HepG2 (cell line): ENCODE measurements at regions of chr5 and their contacts with region 1.

Region 1: DNA sequence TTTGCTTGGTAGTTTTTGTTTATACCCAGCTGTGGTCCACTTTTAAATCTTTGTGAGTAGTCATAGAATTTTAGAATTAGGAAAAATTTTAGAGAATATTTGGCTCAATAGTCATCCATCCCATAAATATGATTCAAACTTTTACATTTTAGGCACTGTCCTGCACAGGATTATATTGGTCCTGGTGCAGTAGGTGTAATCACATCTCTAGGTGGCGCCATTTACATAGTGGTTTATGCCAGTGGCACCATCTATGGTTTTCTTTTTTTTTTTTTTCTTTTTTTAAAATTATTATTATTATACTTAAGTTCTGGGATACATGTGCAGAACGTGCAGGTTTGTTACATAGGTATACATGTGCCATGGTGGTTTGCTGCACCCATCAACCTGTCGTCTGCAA is 260.7 kb upstream of the KCNN2 start:
- DNase-seq: peak; percentile 15
- ATAC-seq: peak; percentile 55; the same call in 2 of the 3 replicates
- H3K4me3 ChIP-seq: no peak overlapping the region
- H3K27ac ChIP-seq: no peak overlapping the region
- H3K4me1 ChIP-seq: no peaks in the 10 kb centered on the region
- H3K27me3 ChIP-seq: no peaks in the 10 kb centered on the region
- CTCF ChIP-seq: peak; percentile 45
- EP300 ChIP-seq: no peak
- POLR2A ChIP-seq: no peak
- RAD21 ChIP-seq: no peak

Region 2: DNA sequence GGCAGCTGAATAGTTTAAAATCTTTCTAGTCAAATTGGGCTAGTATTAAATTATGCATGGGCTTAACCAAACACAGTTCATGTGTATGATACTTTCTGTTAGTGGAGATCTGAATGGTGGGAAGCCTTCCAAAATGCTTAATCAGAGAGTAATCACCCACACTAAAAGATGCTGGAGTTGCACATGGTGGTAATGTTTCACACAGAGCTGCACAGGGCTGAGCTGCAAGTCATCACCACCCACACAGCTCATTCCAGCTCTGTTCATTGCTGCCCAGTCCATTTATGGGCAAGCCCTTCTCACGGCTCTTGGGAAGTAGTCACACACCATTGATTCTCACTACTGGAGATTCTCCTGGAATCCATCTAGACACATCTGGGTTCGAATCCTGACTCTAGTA is 90.8 kb before region 1 on chr5:
- CTCF ChIA-PET with region 1: no interaction called
- POLR2A ChIA-PET with region 1: no interaction called
- in situ Hi-C with region 1: no loop called
- intact Hi-C with region 1: no loop called
- DNase-seq: no peak
- ATAC-seq: no peak
- H3K4me3 ChIP-seq: no peak overlapping the region
- H3K27ac ChIP-seq: no peak overlapping the region
- H3K4me1 ChIP-seq: no peaks in the 10 kb centered on the region
- H3K27me3 ChIP-seq: no peaks in the 10 kb centered on the region
- CTCF ChIP-seq: no peak
- EP300 ChIP-seq: no peak
- POLR2A ChIP-seq: no peak
- RAD21 ChIP-seq: no peak

Region 3: DNA sequence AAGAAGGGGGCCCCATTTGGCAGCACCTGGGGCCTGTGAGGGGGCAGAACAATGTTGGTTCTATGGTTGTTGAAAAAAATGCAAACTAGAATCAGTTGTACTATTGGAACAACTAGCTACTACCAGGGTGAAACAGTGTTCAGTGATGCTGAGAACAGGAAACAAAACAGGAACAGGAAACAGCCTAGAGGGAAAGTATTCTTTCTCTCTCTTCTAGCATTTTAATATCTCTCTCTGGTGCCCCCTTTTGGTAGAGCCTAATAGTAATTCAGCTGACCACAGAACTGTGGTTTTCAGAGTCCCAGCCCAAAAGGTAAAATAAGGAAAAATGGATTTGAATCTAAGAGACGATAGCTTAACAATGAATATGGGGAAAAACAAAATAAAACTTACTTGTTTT is 122.7 kb after region 1 on chr5:
- CTCF ChIA-PET with region 1: no interaction called
- POLR2A ChIA-PET with region 1: no interaction called
- in situ Hi-C with region 1: no loop called
- intact Hi-C with region 1: loop called (anchors 5 kb)
- DNase-seq: peak; percentile 21
- ATAC-seq: no peak
- H3K4me3 ChIP-seq: no peak overlapping the region
- H3K27ac ChIP-seq: no peak overlapping the region
- H3K4me1 ChIP-seq: no peaks in the 10 kb centered on the region
- H3K27me3 ChIP-seq: no peaks in the 10 kb centered on the region
- CTCF ChIP-seq: peak; percentile 26; the same call in 1 of the 2 replicates
- EP300 ChIP-seq: no peak
- POLR2A ChIP-seq: no peak
- RAD21 ChIP-seq: no peak

Region 4: DNA sequence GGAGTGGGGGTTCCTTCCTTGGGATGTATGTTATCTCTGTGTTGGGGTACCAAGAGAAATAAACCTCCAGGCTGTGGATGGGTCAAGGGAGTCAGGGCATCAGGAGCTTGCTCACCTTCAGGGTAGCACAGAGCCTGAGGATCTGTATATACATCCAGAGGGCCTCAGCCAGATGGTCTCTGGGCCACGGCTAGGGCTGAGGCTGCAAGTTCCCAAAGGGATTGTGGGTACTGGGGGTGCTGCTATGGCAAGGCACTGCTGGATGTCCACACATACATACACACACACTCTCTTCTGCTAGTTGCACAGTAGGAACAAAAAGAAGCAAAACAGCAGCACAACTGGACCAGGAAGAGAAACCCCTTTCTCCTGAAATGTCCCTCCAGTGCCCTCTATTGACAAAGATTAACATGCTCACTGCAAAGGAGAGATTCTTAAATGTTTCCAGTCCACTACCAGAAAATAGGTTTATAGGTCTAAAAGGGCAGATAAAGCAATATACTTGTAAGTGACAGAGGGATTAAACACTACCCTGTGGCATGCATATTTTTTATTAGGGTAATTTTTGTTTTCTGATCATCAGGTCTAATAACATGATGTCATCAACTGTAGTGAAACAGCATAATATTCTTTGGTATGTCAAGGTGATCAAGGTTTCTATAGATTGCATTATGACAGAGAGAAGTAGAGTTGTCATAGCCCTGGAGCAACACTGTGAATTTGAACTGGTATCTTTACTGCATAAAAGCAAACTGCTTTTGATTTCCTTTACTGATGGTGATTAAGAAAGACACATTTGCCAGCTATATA is 204.5 kb after region 1 on chr5:
- CTCF ChIA-PET with region 1: interaction called, 4 read pairs
- POLR2A ChIA-PET with region 1: no interaction called
- in situ Hi-C with region 1: no loop called
- intact Hi-C with region 1: loop called (anchors 10 kb)
- DNase-seq: peak; percentile 1
- ATAC-seq: peak; percentile 62
- H3K4me3 ChIP-seq: no peak overlapping the region
- H3K27ac ChIP-seq: no peak overlapping the region
- H3K4me1 ChIP-seq: no peaks in the 10 kb centered on the region
- H3K27me3 ChIP-seq: no peaks in the 10 kb centered on the region
- CTCF ChIP-seq: peak; percentile 40
- EP300 ChIP-seq: no peak
- POLR2A ChIP-seq: no peak
- RAD21 ChIP-seq: no peak